ENCODE measurements at regions of chr5 and their contacts with region 1.

Region 1: DNA sequence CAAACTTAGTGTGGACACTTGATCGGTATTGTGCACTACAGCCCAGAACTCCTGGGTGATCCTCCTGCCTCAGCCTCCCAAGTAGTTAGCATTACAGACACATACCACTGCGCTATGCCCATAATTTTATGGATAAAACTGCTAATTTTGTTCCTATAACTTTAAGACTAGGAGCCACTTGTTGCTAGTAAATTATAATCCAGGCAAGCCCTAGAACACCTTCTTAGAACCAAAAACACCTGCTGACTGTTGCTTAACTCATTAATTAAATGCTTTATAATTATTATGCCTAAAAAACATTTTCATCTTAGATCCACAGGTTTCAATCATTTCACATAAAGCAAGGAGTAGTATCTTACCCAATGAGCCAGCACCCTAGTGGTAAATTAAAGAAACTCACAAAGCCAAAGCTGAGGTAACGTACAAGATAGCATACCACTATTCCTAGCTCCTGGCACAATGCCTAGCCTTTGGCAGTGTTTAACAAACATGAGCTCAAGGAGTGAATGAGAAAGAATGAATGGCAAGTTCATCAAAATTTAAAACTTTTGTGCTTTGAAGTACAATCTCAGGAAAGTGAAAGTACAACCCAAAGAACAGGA is 5.4 kb downstream of the MRPS27 start:
- DNase-seq: no peak
- H3K4me3 ChIP-seq: no peak overlapping the region
- H3K27ac ChIP-seq: no peak overlapping the region
- H3K4me1 ChIP-seq: peaks cover 23% of the 10 kb centered on the region
- H3K27me3 ChIP-seq: no peaks in the 10 kb centered on the region
- CTCF ChIP-seq: no peak
- POLR2A ChIP-seq: no peak

Region 2: GRCh38 chr5:71782771-71783770 is 531.6 kb before region 1 on chr5:
- intact Hi-C with region 1: loop called (anchors 5 kb)
- DNase-seq: no peak
- H3K4me3 ChIP-seq: peak overlapping the region in 1 of 2 donors; percentile 24
- H3K27ac ChIP-seq: peak overlapping the region; percentile 27
- H3K4me1 ChIP-seq: peaks cover 15% of the 10 kb centered on the region
- H3K27me3 ChIP-seq: no peaks in the 10 kb centered on the region
- CTCF ChIP-seq: peak; percentile 50 to 78 (median 67)
- POLR2A ChIP-seq: no peak

Region 3: GRCh38 chr5:72244862-72245371 is 69.8 kb before region 1 on chr5:
- intact Hi-C with region 1: no loop called
- DNase-seq: no peak
- H3K4me3 ChIP-seq: no peak overlapping the region
- H3K27ac ChIP-seq: peak overlapping the region; percentile 69
- H3K4me1 ChIP-seq: peaks cover 52% of the 10 kb centered on the region
- H3K27me3 ChIP-seq: no peaks in the 10 kb centered on the region
- CTCF ChIP-seq: no peak
- POLR2A ChIP-seq: no peak

Region 4: DNA sequence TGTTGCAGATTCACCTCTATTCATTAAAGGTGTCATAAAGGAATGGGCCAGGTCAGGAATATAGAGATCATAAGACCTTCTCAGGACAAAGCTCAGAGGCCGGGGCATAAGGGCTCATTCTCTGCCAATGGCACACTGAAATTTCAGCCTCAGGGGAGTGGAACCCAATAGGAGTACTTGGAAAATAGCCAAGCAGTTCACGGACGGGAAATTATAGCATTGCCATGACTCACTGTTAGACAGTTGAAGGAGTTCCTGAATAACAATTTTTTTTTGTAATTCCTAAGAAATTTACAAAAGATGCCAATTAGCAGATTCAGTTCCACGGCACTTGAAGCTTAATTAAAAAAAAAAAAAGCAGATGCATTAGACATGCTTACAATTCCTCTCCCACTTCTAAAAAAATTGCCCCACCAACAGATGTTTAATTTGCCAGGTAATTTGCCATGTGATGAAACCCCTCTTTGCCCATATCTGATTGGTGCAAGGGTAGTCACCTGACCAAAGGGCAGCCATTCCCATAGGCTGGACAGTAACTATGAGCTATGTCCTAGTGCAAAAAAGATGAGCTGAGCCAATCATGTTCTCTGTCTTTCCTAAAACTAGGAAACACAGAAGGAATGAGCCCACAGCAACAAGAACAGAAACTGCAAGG is 64.1 kb after region 1 on chr5:
- intact Hi-C with region 1: no loop called
- DNase-seq: no peak
- H3K4me3 ChIP-seq: no peak overlapping the region
- H3K27ac ChIP-seq: no peak overlapping the region
- H3K4me1 ChIP-seq: peaks cover 11% of the 10 kb centered on the region
- H3K27me3 ChIP-seq: no peaks in the 10 kb centered on the region
- CTCF ChIP-seq: no peak
- POLR2A ChIP-seq: no peak

Region 5: DNA sequence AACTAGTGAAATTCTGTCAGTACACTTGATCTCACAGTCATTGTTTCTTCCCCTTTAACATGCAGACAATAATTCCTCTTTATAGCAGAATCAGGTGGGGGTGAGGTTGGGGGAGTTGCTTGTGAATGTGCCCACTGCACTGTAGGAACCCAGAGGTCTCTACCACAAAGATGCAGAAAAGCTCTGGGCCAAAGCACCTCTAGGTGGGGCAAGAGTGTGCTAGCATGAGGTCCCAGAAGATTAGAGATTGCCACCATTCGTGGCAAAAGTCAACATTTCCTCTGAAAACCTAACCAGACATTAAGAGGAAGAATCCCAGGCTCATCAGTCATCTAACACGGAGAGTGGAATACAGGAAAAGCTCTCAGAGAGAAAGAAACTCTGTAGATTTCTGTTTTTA is 80.0 kb after region 1 on chr5:
- intact Hi-C with region 1: no loop called
- DNase-seq: no peak
- H3K4me3 ChIP-seq: no peak overlapping the region
- H3K27ac ChIP-seq: no peak overlapping the region
- H3K4me1 ChIP-seq: peaks cover 7% of the 10 kb centered on the region
- H3K27me3 ChIP-seq: no peaks in the 10 kb centered on the region
- CTCF ChIP-seq: no peak
- POLR2A ChIP-seq: no peak